Heart right ventricle (tissue), 16 donors: ENCODE measurements at regions of chr6 and their contacts with region 1.

Region 1: GRCh38 chr6:53171605-53172446 is 23.2 kb upstream of the GCM1 start:
- DNase-seq: peak; percentile 88 to 90
- ATAC-seq: peak; percentile 89 to 97 (median 94)
- H3K4me3 ChIP-seq: no peak overlapping the region
- H3K27ac ChIP-seq: no peak overlapping the region
- H3K4me1 ChIP-seq: peaks cover 0 to 14% (median 3%) of the 10 kb centered on the region in 9 donors
- H3K27me3 ChIP-seq: no peaks in the 10 kb centered on the region
- CTCF ChIP-seq: peak; percentile 100

Region 2: GRCh38 chr6:53273370-53273769 is 101.5 kb after region 1 on chr6:
- intact Hi-C with region 1: loop called in 1 of 10 experiments (anchors 10 kb)
- DNase-seq: no peak
- ATAC-seq: no peak
- H3K4me3 ChIP-seq: no peak overlapping the region
- H3K27ac ChIP-seq: no peak overlapping the region
- H3K4me1 ChIP-seq: peaks cover 0 to 19% (median 3%) of the 10 kb centered on the region in 9 donors
- H3K27me3 ChIP-seq: no peaks in the 10 kb centered on the region
- CTCF ChIP-seq: peak in 1 of 9 donors; percentile 12

Region 3: DNA sequence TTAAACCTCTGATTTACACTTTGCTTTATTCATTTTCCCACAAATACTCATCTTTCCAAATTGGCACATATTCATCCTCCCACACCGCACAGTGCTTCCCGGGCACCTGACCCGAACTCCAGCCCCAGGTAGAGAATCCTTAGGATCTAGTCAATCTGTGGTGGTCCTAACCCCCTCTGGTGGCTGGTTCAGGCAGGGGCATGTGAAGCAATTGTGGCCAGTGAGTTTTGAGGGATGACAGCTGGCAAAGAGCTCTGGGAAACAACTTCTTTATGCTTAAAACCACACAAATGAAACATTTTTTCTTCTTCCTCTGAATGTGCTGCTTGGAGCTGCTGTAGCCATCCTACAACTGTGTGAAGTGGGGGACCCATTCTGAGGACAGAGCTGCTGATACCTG is 122.3 kb after region 1 on chr6:
- intact Hi-C with region 1: loop called in 3 of 10 experiments (anchors 1 to 10 kb)
- DNase-seq: no peak
- ATAC-seq: peak in 3 of 8 donors; percentile 31 to 56 (median 45)
- H3K4me3 ChIP-seq: no peak overlapping the region
- H3K27ac ChIP-seq: peak overlapping the region in 1 of 10 donors; percentile 5
- H3K4me1 ChIP-seq: peaks cover 0 to 68% (median 43%) of the 10 kb centered on the region in 9 donors
- H3K27me3 ChIP-seq: no peaks in the 10 kb centered on the region
- CTCF ChIP-seq: peak; percentile 22 to 68 (median 56)

Region 4: GRCh38 chr6:53359072-53359842 is 187.4 kb after region 1 on chr6:
- intact Hi-C with region 1: loop called in 2 of 10 experiments (anchors 5 to 10 kb)
- DNase-seq: peak; percentile 96 to 97
- ATAC-seq: peak; percentile 96 to 99 (median 98)
- H3K4me3 ChIP-seq: peak overlapping the region; percentile 48 to 89 (median 70)
- H3K27ac ChIP-seq: peak overlapping the region; percentile 89 to 98 (median 96)
- H3K4me1 ChIP-seq: peaks cover 4 to 23% (median 14%) of the 10 kb centered on the region in 9 donors
- H3K27me3 ChIP-seq: no peaks in the 10 kb centered on the region
- CTCF ChIP-seq: peak in 1 of 9 donors; percentile 26

Region 5: DNA sequence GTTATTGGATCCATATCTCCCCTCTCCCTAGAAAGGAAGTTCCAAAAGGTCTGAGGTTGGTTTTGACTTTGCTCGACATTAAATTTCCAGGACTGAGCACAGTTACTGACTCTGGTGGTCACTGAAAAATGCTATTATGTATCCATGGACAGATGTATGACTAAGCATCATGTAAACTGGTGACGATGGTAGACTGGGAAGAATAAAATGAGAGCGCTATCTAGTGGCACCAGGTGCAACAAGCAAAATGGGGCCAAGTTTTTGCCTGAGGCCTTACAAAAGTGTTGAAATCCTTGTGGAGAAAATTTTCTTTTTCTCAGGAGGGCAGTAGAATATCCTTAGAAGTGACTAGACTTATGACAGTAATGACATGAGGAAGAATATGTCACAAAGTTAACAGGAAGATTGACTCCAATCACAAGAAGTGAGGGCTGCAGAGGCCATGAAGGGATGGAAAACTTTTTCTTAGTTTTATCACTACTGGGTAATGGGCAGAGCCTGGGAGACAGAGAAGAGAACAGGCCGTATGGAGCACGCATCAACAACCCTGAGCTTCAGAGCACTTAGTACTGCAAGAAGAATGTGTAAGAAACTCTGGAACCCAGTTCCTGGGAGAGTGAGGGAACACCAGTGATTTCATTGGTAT is 265.9 kb after region 1 on chr6:
- intact Hi-C with region 1: loop called in 5 of 10 experiments (anchors 2 to 10 kb)
- DNase-seq: peak in 1 of 2 donors; percentile 8
- ATAC-seq: peak in 6 of 8 donors; percentile 44 to 74 (median 62)
- H3K4me3 ChIP-seq: no peak overlapping the region
- H3K27ac ChIP-seq: no peak overlapping the region
- H3K4me1 ChIP-seq: peaks cover 0 to 43% (median 21%) of the 10 kb centered on the region in 9 donors
- H3K27me3 ChIP-seq: no peaks in the 10 kb centered on the region
- CTCF ChIP-seq: peak in 8 of 9 donors; percentile 39 to 65 (median 59)

Region 6: DNA sequence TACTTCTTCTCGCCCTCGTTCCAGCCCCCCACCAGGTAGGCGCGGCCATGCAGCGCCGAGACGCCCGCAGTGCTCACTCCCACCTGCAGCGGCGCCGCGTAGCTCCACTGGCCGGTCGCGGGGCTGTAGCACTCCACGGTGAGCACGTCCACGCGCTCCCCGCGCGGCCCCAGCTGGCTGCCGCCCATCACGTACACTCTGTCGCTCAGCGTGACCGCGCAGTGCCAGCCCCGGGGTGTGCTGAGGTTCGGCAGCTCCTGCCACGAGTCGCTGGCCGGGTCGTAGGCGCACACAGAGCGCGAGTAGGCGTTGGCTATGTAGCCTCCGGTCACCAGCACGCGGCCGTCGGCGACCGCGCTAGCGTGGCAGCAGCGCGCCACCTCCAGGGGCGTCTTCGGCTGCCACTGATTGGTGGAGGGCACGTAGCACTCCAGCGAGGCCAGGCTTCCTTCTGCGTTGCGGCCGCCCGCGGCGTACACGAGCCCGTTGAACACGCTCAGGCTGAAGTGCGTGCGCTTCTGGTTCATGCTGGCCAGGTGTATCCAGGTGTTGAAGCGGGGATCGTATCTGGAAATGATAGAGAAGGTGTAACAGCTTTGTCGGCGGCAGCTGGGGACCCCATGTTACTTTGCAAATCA is 480.1 kb after region 1 on chr6:
- intact Hi-C with region 1: loop called in 1 of 10 experiments (anchors 10 kb)
- DNase-seq: peak; percentile 41 to 65
- ATAC-seq: peak; percentile 77 to 88 (median 82)
- H3K4me3 ChIP-seq: peak overlapping the region; percentile 11 to 65 (median 51)
- H3K27ac ChIP-seq: peak overlapping the region in 4 of 10 donors; percentile 7 to 54 (median 30)
- H3K4me1 ChIP-seq: peaks cover 3 to 70% (median 37%) of the 10 kb centered on the region in 9 donors
- H3K27me3 ChIP-seq: peaks cover 0 to 12% (median 5%) of the 10 kb centered on the region in 7 donors
- CTCF ChIP-seq: peak in 5 of 9 donors; percentile 9 to 44 (median 35)